Activated naive CD4-positive, alpha-beta T cell treated with anti-CD3 and anti-CD28 coated beads for 36 hours (primary cell): ENCODE measurements at regions of chr17 and their contacts with region 1.

Region 1: DNA sequence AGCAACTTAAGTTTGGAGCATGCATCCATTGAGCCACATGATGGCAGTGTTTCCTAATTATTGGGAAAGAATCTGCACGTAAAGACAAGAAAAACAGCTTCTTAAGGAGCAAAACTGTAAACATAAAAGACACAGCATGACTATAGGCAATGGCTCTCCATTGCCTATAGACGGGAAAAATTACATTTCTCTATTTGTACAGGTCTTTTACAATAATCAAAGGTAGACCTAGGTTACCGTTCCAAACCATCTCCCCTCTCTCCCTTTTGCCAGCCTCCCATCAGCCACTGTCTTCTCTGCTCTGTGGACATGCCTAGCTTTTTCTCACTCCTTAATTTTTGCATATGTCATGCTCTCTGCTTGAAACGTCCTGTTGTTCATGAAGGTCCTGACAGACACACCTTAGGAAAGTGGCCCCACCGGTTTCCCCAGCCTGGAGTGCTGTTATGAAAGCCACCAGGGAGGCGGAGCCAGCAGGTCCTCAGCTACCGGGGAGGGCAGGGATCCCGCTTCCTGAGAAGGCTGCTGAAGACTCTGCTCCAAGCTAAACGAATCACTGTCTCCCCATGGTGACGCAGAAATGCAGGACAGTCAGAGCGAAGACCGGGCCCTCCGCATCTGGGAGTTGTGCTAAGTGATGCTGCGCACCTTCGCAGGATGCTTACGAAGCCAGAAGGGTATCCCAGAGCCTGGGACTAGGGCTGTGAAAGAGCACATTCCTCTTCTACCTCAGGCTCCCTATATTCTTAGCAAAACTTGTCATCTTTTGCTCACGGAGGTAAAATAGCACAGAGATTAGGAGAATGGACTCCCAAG is 2.2 kb upstream of the SLC16A11 start:
- DNase-seq: peak; percentile 67
- H3K4me3 Mint-ChIP-seq: peak overlapping the region; percentile 52
- H3K27ac Mint-ChIP-seq: peak overlapping the region; percentile 52
- H3K4me1 Mint-ChIP-seq: peaks cover 36% of the 10 kb centered on the region
- H3K27me3 Mint-ChIP-seq: no peaks in the 10 kb centered on the region

Region 2: GRCh38 chr17:7035591-7036368 is 10.3 kb before region 1 on chr17 and contains the start of gene SLC16A13:
- CTCF ChIA-PET with region 1: interaction called, 16 read pairs
- intact Hi-C with region 1: loop called (anchors 1 kb)
- DNase-seq: peak; percentile 99
- H3K4me3 Mint-ChIP-seq: peak within 1 kb of the TSS; percentile 96
- H3K27ac Mint-ChIP-seq: peak within 1 kb of the TSS; percentile 99
- H3K4me1 Mint-ChIP-seq: peaks cover 49% of the 10 kb centered on the region
- H3K27me3 Mint-ChIP-seq: no peaks in the 10 kb centered on the region
- total RNA-seq, gene SLC16A13: 4.1 to 5.3 TPM

Region 3: DNA sequence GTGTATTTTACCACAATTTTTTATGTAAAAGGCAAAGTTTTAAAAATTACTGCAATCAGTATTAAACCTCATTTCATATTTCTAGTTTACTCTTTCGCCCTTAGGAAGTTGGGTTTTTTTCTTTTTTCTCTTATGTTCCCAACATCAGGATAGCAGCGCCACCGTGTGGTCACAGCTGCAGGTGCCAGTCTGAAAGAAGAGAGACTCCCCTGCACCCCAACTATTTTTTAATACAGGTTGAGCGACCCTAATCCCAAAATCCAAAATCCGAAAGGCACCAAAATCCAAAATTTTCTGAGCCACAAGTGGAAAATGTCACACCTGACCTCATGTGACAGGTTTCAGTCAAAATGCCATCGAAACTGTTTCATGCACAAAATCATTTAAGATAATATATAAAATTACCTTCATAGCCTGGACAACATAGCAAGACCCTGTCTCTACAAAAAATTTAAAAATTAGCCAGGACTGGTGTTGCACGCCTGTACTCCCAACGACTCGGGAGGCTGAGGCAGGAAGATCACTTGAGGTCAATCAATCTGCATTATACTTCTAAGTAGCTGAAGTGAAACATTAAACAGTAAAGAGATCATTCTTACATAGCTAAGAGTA is 90.3 kb after region 1 on chr17:
- CTCF ChIA-PET with region 1: interaction called, 238 read pairs
- intact Hi-C with region 1: loop called (anchors 1 kb)
- DNase-seq: peak; percentile 88
- H3K4me3 Mint-ChIP-seq: no peak overlapping the region
- H3K27ac Mint-ChIP-seq: no peak overlapping the region
- H3K4me1 Mint-ChIP-seq: peaks cover 24% of the 10 kb centered on the region
- H3K27me3 Mint-ChIP-seq: no peaks in the 10 kb centered on the region

Region 4: GRCh38 chr17:7214300-7215135 is 168.4 kb after region 1 on chr17:
- CTCF ChIA-PET with region 1: interaction called, 4 read pairs
- intact Hi-C with region 1: loop called (anchors 2 kb)
- DNase-seq: peak; percentile 100
- H3K4me3 Mint-ChIP-seq: peak overlapping the region; percentile 88
- H3K27ac Mint-ChIP-seq: peak overlapping the region; percentile 92
- H3K4me1 Mint-ChIP-seq: peaks cover 52% of the 10 kb centered on the region
- H3K27me3 Mint-ChIP-seq: no peaks in the 10 kb centered on the region

Region 5: GRCh38 chr17:7296189-7296902 is 250.2 kb after region 1 on chr17:
- CTCF ChIA-PET with region 1: interaction called, 7 read pairs
- intact Hi-C with region 1: loop called (anchors 2 kb)
- DNase-seq: peak; percentile 72
- H3K4me3 Mint-ChIP-seq: peak overlapping the region; percentile 32
- H3K27ac Mint-ChIP-seq: no peak overlapping the region
- H3K4me1 Mint-ChIP-seq: peaks cover 19% of the 10 kb centered on the region
- H3K27me3 Mint-ChIP-seq: peaks cover 24% of the 10 kb centered on the region

Region 6: GRCh38 chr17:7363311-7363710 is 317.2 kb after region 1 on chr17:
- CTCF ChIA-PET with region 1: no interaction called
- intact Hi-C with region 1: no loop called
- DNase-seq: no peak
- H3K4me3 Mint-ChIP-seq: no peak overlapping the region
- H3K27ac Mint-ChIP-seq: no peak overlapping the region
- H3K4me1 Mint-ChIP-seq: no peaks in the 10 kb centered on the region
- H3K27me3 Mint-ChIP-seq: no peaks in the 10 kb centered on the region